Cardiac septum (tissue), 1 donor: ENCODE measurements at regions of chr2 and their contacts with region 1.

Region 1: DNA sequence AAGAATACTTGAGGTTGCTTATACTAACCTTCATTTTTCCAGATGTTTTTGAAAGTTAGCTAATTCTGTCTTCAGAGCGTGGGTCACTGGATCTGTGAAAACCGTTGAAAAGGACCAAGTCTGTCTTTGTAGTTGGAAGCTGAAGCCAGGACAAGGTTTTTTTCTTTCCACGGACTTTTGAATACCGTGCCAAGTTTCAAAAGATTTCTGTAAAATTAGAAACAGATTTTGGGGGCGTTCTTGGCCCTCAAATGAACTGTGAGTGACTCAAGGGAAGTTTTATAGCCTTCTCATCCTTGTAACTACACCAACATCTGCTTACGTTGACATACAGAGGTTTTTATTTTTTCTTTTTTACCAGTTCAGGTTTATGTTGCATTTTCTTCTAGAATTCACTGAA is at the start of gene FAP:
- DNase-seq: no peak
- total RNA-seq, gene FAP: 10.4 TPM

Region 2: GRCh38 chr2:162113776-162114168 is 129.5 kb before region 1 on chr2:
- intact Hi-C with region 1: no loop called
- DNase-seq: no peak

Region 3: GRCh38 chr2:162266460-162266760 is 23.1 kb after region 1 on chr2:
- intact Hi-C with region 1: loop called (anchors 2 kb)
- DNase-seq: no peak